CD8-positive, alpha-beta T cell (primary cell): ENCODE measurements at regions of chr18 and their contacts with region 1.

Region 1: DNA sequence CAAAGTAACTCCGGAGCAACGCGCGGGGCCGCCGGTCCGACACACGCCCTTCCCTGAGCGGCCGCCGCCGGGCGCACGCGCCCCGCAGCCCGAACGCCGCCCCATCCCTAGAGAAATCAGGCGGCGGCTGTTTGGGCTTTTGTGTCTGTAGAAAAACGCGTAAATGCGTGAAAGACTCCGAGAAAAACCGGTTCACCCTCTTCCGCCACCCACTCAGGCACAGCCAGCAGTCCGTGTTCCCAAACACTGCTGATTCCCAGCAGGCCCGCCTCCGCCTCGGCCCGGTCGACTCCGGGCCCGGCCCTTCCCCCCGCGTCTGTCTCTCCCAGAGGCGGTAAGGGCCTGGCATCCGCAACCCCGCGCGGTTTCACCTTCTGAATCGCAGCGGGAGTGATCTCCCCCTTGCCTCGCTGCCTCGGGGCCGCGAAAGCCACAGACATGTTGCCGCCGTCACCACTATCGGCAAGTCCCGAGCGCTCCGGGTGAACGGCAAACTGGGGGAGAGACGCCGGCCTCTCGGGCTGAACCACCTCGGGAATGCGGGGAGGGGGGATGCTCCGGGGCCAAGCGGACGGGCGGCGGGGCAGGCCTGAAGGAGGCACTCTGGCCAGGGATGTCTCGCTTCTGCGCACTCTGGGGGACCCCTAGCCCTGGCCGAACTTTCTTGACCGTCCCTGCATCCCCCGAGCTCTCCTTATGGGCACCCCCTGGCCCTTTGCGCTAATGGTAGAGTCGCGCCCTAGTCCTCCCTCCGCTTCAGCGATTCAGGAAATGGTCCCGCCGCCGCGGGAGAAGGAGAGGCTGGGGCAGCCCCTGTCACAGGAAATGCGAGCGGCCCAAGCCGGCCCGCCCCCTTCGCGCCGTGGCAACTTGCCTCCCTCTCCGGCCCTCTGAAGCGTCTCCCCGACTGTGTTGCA is at the start of gene SS18:
- DNase-seq: peak; percentile 74 to 96 (median 90)
- ATAC-seq: peak; percentile 84
- H3K4me3 ChIP-seq: peak within 1 kb of the TSS; percentile 81 to 99
- H3K4me3 Mint-ChIP-seq: peak within 1 kb of the TSS; percentile 95
- H3K27ac ChIP-seq: peak within 1 kb of the TSS; percentile 90 to 93
- H3K27ac Mint-ChIP-seq: peak within 1 kb of the TSS; percentile 97
- H3K4me1 ChIP-seq: peaks cover 19% of the 10 kb centered on the region
- H3K4me1 Mint-ChIP-seq: peaks cover 43% of the 10 kb centered on the region
- H3K27me3 ChIP-seq: no peaks in the 10 kb centered on the region
- H3K27me3 Mint-ChIP-seq: no peaks in the 10 kb centered on the region
- CTCF ChIP-seq: no peak
- total RNA-seq, gene SS18: 40.4 to 42.1 TPM

Region 2: GRCh38 chr18:26073758-26074157 is 16.6 kb before region 1 on chr18:
- CTCF ChIA-PET with region 1: no interaction called
- POLR2A ChIA-PET with region 1: interaction called, 3 read pairs
- intact Hi-C with region 1: loop called in 1 of 2 experiments (anchors 2 kb)
- DNase-seq: no peak
- ATAC-seq: no peak
- H3K4me3 ChIP-seq: no peak overlapping the region
- H3K4me3 Mint-ChIP-seq: no peak overlapping the region
- H3K27ac ChIP-seq: no peak overlapping the region
- H3K27ac Mint-ChIP-seq: no peak overlapping the region
- H3K4me1 ChIP-seq: no peaks in the 10 kb centered on the region
- H3K4me1 Mint-ChIP-seq: peaks cover 55% of the 10 kb centered on the region
- H3K27me3 ChIP-seq: no peaks in the 10 kb centered on the region
- H3K27me3 Mint-ChIP-seq: no peaks in the 10 kb centered on the region
- CTCF ChIP-seq: no peak

Region 3: GRCh38 chr18:26133652-26134051 is 43.3 kb after region 1 on chr18 and contains the start of gene PSMA8:
- CTCF ChIA-PET with region 1: interaction called, 3 read pairs
- POLR2A ChIA-PET with region 1: interaction called, 6 read pairs
- intact Hi-C with region 1: loop called in 1 of 2 experiments (anchors 5 kb)
- DNase-seq: peak; percentile 10 to 84 (median 60)
- ATAC-seq: peak; percentile 88
- H3K4me3 ChIP-seq: peak within 1 kb of the TSS in 1 of 2 experiments; percentile 46
- H3K4me3 Mint-ChIP-seq: peak within 1 kb of the TSS; percentile 77
- H3K27ac ChIP-seq: peak within 1 kb of the TSS; percentile 40 to 57
- H3K27ac Mint-ChIP-seq: peak within 1 kb of the TSS; percentile 88
- H3K4me1 ChIP-seq: no peaks in the 10 kb centered on the region
- H3K4me1 Mint-ChIP-seq: no peaks in the 10 kb centered on the region
- H3K27me3 ChIP-seq: no peaks in the 10 kb centered on the region
- H3K27me3 Mint-ChIP-seq: no peaks in the 10 kb centered on the region
- CTCF ChIP-seq: no peak
- total RNA-seq, gene PSMA8: 0.25 TPM in 1 of 2 experiments, not detected in the other

Region 4: DNA sequence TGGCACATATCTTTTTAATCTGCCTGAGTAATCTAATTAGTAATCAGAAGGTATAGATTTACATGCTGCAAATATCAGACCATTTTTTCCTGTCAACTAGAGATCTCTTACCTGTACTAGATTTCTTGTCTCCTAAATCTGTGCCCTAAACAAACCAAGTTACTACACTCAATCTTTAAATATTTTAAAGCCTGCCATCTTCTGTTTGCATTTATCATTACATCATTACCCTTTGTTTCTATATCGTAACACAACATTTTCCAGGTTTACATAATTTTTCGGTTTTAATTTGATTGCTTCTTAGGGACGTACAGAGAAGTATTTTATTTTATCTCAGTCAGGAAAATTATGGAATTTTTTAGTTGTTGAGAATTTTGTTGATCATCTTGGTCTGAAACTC is 69.0 kb after region 1 on chr18:
- CTCF ChIA-PET with region 1: no interaction called
- POLR2A ChIA-PET with region 1: no interaction called
- intact Hi-C with region 1: loop called (anchors 2 to 5 kb)
- DNase-seq: peak in 2 of 9 experiments; percentile 29 to 41
- ATAC-seq: no peak
- H3K4me3 ChIP-seq: no peak overlapping the region
- H3K4me3 Mint-ChIP-seq: no peak overlapping the region
- H3K27ac ChIP-seq: no peak overlapping the region
- H3K27ac Mint-ChIP-seq: no peak overlapping the region
- H3K4me1 ChIP-seq: no peaks in the 10 kb centered on the region
- H3K4me1 Mint-ChIP-seq: peaks cover 6% of the 10 kb centered on the region
- H3K27me3 ChIP-seq: no peaks in the 10 kb centered on the region
- H3K27me3 Mint-ChIP-seq: no peaks in the 10 kb centered on the region
- CTCF ChIP-seq: peak; percentile 57

Region 5: DNA sequence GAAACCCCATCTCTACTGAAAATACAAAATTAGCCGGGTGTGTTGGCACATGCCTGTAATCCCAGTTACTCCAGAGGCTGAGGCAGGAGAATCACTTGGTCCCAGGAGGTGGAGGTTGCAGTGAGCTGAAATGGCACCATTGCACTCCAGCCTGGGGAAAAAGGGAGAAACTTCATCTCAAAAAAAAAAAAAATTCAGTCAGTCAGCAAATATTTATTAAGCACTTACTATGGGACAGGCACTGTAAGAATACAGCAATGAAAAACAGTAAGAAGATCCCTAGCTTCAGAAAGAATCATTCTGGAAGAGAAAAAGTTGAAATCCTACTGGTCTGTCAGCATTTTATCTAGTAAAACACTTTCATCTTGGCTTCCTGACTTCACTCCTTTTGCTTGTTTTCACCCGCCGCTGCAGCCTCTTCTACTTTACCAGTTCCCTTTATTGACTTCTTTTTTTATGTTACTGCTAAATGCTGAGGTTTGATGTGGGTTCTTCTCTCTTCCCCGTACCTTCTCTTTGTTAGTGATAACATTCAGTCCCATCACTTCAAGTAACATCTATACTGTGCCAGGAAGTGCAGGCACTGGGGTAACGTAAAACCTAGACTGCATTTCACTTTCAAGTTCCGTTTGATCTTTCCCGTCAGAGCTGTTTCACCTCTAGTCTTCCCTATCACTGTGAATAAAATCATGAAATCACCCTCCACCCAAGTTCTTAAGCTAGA is 125.0 kb after region 1 on chr18:
- CTCF ChIA-PET with region 1: no interaction called
- POLR2A ChIA-PET with region 1: no interaction called
- intact Hi-C with region 1: loop called in 1 of 2 experiments (anchors 1 kb)
- DNase-seq: peak; percentile 2 to 87 (median 50)
- ATAC-seq: peak; percentile 96
- H3K4me3 ChIP-seq: peak overlapping the region in 1 of 2 experiments; percentile 20
- H3K4me3 Mint-ChIP-seq: peak overlapping the region; percentile 62
- H3K27ac ChIP-seq: peak overlapping the region in 1 of 2 experiments; percentile 57
- H3K27ac Mint-ChIP-seq: peak overlapping the region; percentile 79
- H3K4me1 ChIP-seq: peaks cover 19% of the 10 kb centered on the region
- H3K4me1 Mint-ChIP-seq: peaks cover 33% of the 10 kb centered on the region
- H3K27me3 ChIP-seq: no peaks in the 10 kb centered on the region
- H3K27me3 Mint-ChIP-seq: no peaks in the 10 kb centered on the region
- CTCF ChIP-seq: no peak

Region 6: DNA sequence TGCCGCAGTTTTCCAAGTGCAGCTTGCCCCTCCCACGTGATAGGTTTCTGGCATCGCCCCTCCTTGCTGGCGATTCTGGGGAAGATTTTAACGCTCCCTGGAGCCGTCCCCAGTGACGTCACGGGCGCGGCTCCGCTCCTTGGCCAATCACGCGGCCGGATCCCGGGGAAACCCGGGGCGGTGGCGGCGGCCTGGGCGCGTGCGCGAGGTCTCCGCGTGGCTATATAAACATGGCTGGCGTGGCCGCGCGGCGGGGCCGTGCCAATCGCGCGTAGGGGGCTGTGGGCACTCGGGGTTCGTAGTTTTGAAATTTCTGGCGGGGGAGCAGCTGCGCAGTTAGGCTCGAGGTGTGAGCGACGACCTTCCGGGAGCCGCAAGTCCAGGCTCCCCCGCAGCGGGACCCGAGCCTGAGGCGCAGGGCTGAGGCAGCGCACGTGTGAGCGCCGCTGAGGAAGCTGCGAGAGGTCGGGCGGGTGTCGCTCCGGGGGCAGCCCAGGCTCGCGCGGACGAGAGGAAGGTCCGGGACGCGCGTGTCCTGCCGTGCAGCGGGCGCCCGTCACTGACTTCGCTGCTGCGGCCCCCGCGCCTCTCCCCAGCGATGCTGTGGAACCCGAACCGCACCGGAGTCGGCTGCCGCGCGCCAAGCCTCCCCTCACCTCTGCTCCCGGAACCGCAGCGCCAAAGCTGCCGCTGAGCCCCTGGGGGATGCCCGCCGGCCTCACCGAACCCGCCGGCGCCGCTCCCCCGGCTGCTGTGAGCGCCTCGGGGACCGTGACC is 136.0 kb after region 1 on chr18 and contains the start of gene TAF4B:
- CTCF ChIA-PET with region 1: no interaction called
- POLR2A ChIA-PET with region 1: interaction called, 6 read pairs
- intact Hi-C with region 1: loop called (anchors 1 to 2 kb)
- DNase-seq: peak; percentile 85 to 95 (median 92)
- ATAC-seq: peak; percentile 87
- H3K4me3 ChIP-seq: peak within 1 kb of the TSS; percentile 63 to 69
- H3K4me3 Mint-ChIP-seq: peak within 1 kb of the TSS; percentile 96
- H3K27ac ChIP-seq: peak within 1 kb of the TSS; percentile 81 to 82
- H3K27ac Mint-ChIP-seq: peak within 1 kb of the TSS; percentile 98
- H3K4me1 ChIP-seq: peaks cover 14% of the 10 kb centered on the region
- H3K4me1 Mint-ChIP-seq: peaks cover 35% of the 10 kb centered on the region
- H3K27me3 ChIP-seq: no peaks in the 10 kb centered on the region
- H3K27me3 Mint-ChIP-seq: no peaks in the 10 kb centered on the region
- CTCF ChIP-seq: no peak
- total RNA-seq, gene TAF4B: 11.5 to 12.3 TPM

Region 7: GRCh38 chr18:26335571-26336487 is 245.4 kb after region 1 on chr18:
- CTCF ChIA-PET with region 1: no interaction called
- POLR2A ChIA-PET with region 1: no interaction called
- intact Hi-C with region 1: loop called in 1 of 2 experiments (anchors 10 kb)
- DNase-seq: no peak
- ATAC-seq: no peak
- H3K4me3 ChIP-seq: no peak overlapping the region
- H3K4me3 Mint-ChIP-seq: no peak overlapping the region
- H3K27ac ChIP-seq: no peak overlapping the region
- H3K27ac Mint-ChIP-seq: no peak overlapping the region
- H3K4me1 ChIP-seq: no peaks in the 10 kb centered on the region
- H3K4me1 Mint-ChIP-seq: peaks cover 5% of the 10 kb centered on the region
- H3K27me3 ChIP-seq: no peaks in the 10 kb centered on the region
- H3K27me3 Mint-ChIP-seq: no peaks in the 10 kb centered on the region
- CTCF ChIP-seq: no peak